Activated CD8-positive, alpha-beta memory T cell treated with anti-CD3 and anti-CD28 coated beads, Interleukin-2, amount 10 ng/mL, durations not matched to agents 7 days and 5 days (primary cell): ENCODE measurements at regions of chr7 and their contacts with region 1.

Region 1: DNA sequence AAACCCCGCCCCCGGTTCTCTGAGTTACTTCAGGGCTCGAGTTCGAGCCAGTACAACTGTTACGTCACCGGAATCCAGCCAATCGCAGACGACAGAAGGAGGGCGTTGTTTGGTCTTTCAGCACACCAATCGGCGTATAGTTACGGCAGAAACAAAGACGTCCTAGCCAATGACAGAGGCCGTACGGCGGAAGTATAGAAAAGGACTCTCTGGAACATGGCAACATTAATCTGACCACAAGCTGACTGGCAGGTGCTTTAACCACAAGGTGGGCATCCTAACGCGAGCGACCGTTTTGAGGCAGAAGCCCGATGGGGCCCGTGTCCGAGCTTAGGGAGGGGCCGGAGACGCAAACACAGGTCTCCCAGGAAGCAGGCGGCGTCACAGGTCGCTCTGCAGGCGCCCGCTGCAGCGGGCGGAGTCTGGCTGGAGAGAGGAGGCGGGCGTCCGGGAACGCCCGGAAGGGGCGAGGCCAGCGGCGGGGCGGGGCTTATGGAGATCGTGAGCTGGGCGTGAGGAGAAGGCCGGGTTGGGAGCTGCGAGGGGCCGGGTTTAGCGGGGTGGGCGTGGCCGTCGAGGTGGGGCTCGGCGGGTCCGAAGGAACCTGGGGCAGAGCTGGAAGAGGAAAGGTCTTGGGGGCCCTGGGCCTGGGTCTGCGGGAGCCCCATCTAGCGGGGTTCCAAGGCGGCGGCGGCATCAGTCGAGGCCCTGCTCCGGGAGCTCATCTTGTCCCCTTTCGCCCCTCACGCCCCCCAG is at the start of gene MOSPD3:
- DNase-seq: peak; percentile 99
- ATAC-seq: peak; percentile 95
- H3K4me3 Mint-ChIP-seq: peak within 1 kb of the TSS; percentile 87
- H3K27ac Mint-ChIP-seq: peak within 1 kb of the TSS; percentile 100
- H3K4me1 Mint-ChIP-seq: peaks cover 22% of the 10 kb centered on the region
- H3K27me3 Mint-ChIP-seq: no peaks in the 10 kb centered on the region
- total RNA-seq, gene MOSPD3: 22.2 to 28.8 TPM

Region 2: DNA sequence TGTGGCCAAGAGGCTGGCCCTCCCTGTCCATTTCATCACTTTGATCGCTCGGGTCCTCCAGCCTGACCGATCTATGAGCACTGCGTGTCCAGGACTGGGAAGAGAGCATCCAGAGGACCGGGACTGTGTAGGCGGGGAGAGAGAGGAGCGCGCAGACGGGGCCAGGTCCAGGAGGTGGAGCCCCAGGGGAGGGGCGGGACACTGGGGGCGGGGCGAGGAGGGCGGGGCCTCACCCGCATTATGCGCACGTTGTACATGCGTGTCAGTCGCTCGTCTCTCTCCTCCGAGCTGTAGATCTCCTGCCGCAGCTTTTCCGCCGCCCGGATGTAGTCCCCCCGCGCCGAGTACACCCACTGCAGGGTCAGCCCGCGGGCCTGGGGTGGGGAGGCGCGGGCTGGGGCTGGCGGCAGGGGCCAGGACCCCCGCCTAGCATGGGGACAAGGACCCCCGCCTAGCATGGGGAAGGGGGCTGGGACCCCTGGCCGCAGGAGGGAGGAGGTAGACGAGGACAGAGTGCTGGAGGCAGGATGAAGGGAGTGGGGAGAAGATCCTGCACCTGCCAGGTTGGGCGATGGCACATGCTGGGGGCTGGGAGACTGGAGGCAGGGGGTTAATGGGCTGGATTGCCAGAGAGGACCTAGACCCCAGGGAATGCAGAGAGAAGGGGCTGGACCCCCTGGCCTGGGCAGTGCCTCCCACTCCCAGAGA is 14.5 kb after region 1 on chr7:
- CTCF ChIA-PET with region 1: interaction called, 20 read pairs
- DNase-seq: peak; percentile 96
- ATAC-seq: peak; percentile 96
- H3K4me3 Mint-ChIP-seq: peak overlapping the region; percentile 69
- H3K27ac Mint-ChIP-seq: peak overlapping the region; percentile 81
- H3K4me1 Mint-ChIP-seq: peaks cover 50% of the 10 kb centered on the region
- H3K27me3 Mint-ChIP-seq: no peaks in the 10 kb centered on the region